ENCODE measurements at regions of chr15 and their contacts with region 1.

Region 1: DNA sequence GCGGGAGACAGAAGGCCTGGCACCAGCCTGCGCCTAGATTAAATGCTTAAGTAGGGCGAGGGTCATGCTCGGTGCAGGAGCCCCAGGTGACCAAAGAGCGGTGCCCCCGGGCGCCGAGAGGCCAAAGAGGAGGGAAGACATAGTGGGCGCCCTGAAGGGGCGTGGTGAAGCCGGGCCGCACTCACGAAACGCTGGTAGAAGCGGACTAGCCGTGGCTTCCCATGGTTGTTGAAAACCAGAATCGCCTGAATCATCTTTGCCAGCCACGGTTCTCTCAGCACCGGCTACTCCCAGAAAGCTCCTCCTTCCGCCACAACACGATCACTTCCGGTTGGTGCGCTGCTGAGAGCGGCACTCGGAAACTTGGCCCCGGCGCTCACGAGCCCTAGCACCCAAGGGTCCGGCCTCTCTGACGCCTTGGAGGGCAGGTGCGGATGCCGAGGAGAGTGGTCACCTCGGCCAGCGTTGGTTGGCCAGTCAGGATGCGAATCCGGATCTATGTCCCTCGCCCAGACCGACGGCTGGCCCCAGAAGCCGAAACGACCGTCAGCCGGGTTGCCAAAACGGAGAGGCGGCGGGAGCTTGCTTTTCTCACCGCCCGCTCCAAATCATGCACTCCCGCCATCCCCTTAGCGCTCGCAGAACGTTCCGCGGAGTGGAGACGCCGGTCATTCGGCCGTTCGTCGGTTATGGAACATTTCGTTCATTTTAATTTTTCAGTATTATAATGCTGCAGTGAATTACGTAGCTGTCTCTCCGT is at the start of gene AP3S2:
- DNase-seq: peak; percentile 87
- ATAC-seq: peak; percentile 98
- H3K4me3 ChIP-seq: peak within 1 kb of the TSS; percentile 78 to 94
- H3K27ac ChIP-seq: peak within 1 kb of the TSS; percentile 98
- H3K4me1 ChIP-seq: peaks cover 8% of the 10 kb centered on the region; the same call in 1 of the 2 replicates
- H3K27me3 ChIP-seq: no peaks in the 10 kb centered on the region
- CTCF ChIP-seq: no peak
- total RNA-seq, gene AP3S2: 24.6 TPM

Region 2: DNA sequence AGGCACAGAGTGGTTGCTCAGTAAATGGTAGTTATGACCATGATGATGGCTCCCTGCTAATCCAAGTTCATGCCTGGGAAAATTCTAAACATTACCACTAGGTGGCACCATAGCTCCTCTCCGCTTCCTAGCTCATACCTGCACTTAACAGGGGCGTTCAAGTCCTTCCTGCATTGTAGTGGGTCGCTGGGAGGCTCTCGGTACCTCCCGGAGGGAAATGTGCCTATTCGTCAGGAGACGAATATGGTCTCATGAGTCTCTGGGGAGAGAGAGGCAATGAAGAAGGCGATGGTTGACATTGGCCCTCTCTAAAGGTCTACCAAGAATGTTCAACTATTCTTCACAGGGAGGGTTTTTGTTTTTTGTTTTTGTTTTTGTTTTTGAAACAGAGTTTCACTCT is 153.7 kb before region 1 on chr15:
- CTCF ChIA-PET with region 1: interaction called, 15 read pairs
- POLR2A ChIA-PET with region 1: no interaction called
- in situ Hi-C with region 1: no loop called
- intact Hi-C with region 1: loop called (anchors 5 kb)
- DNase-seq: peak; percentile 72
- ATAC-seq: peak; percentile 96
- H3K4me3 ChIP-seq: no peak overlapping the region; a peak in 1 of 4 replicates
- H3K27ac ChIP-seq: no peak overlapping the region
- H3K4me1 ChIP-seq: no peaks in the 10 kb centered on the region
- H3K27me3 ChIP-seq: no peaks in the 10 kb centered on the region
- CTCF ChIP-seq: peak; percentile 94

Region 3: DNA sequence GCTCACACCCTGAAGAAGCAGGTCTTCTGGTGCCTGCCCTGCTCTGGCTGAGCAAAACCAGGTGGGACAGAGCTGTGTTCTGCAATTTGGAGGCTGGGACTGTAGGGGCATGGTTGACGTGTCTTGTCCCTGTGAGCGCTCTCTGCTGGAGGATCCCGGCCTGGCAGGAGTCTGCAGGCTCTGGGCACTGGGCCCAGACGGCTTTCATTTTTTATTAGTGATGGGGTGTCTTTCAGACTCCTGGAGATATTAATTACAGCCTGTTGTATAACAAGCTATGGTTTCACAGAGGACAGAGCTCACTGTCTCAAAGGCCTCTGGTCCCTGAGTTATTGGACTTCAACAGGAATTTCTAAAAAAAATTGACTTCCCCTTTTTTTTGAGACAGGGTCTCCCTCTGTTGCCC is 77.7 kb after region 1 on chr15:
- CTCF ChIA-PET with region 1: interaction called, 10 read pairs
- POLR2A ChIA-PET with region 1: no interaction called
- in situ Hi-C with region 1: no loop called
- intact Hi-C with region 1: loop called (anchors 2 kb)
- DNase-seq: peak; percentile 30
- ATAC-seq: peak; percentile 98
- H3K4me3 ChIP-seq: no peak overlapping the region
- H3K27ac ChIP-seq: no peak overlapping the region
- H3K4me1 ChIP-seq: no peaks in the 10 kb centered on the region
- H3K27me3 ChIP-seq: no peaks in the 10 kb centered on the region
- CTCF ChIP-seq: peak; percentile 77

Region 4: DNA sequence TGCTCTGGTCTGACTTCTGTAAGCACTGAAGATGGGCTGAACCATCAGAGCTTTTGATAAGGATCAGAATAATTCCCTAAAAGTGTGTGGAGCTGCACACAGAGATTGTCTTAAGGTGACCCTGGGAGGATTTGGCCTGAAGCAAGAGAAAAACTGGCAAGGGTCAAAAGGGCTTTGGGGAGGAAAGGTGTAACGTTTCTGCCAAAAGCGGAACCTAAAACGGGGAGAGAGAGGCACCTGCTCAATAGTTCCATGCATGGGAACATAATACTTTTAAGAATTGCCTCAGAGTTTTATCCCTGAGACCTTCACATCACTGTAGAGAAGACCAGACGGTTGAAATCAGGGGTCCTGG is 113.1 kb after region 1 on chr15:
- CTCF ChIA-PET with region 1: interaction called, 4 read pairs
- POLR2A ChIA-PET with region 1: interaction called, 12 read pairs
- in situ Hi-C with region 1: no loop called
- intact Hi-C with region 1: no loop called
- DNase-seq: no peak
- ATAC-seq: no peak
- H3K4me3 ChIP-seq: no peak overlapping the region
- H3K27ac ChIP-seq: no peak overlapping the region
- H3K4me1 ChIP-seq: peaks cover 35% of the 10 kb centered on the region
- H3K27me3 ChIP-seq: no peaks in the 10 kb centered on the region
- CTCF ChIP-seq: no peak

Measured in Panc1 (cell line).